Activated T-helper 2 cell treated with anti-CD3 and anti-CD28 coated beads, Interferon-gamma antibody, Interleukin-2, Interleukin-4, amounts not matched to agents 10 μg/mL and 5 μg/mL and 100 μg/mL, durations not matched to agents 14 hours and 24 hours and 36 hours (primary cell): ENCODE measurements at regions of chr2 and their contacts with region 1.

Region 1: DNA sequence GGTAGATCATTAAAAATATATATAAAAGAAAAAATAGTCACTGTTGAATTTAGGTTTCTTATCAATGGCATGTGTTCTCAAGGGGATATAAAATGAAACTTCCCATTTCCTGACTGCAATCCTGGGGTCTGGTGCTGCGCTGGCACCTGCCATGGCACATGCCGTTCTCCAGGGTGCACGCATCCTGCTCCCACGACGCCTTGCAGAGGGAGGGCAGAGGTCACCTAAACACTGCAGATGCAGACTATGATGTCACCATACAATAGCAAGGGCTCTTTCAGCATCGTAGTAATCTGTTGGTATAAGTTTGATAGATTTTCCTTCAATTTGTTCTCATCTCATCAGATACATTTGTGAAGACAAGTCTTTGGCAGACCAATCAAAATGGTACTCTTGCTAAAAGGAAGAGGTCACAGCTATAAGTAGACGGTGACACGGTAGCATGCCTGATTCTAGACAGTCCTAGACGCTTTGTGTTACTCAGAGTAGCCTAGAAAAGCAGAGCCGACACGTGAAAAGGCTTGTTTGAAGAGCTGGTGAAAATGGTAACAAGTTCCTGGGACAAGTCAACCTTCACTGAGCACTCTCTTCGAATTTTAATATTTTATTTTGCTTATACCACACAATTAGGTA is 761.4 kb downstream of the DCDC2C start:
- DNase-seq: no peak
- H3K4me3 Mint-ChIP-seq: no peak overlapping the region
- H3K27ac Mint-ChIP-seq: no peak overlapping the region
- H3K4me1 Mint-ChIP-seq: no peaks in the 10 kb centered on the region
- H3K27me3 Mint-ChIP-seq: no peaks in the 10 kb centered on the region

Region 2: DNA sequence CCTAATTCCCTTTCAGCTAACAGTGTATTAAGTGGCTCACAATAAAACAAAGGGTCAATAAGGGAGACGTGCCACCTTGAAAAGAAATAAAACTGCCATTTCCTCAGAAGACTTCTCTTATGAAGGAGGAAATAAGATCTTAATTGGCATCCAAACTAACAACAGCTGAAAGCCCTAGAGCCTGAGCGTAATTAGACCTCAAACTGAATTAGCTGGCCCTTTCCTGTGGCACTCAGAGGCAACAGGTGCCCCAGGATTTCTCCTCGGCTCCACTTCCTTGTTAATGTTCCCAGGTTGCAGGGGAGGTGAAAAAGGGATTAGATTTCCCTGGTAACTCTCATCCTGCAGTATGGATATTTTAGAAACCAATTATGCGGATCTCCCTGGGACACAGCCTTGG is 42.9 kb after region 1 on chr2:
- intact Hi-C with region 1: loop called (anchors 2 kb)
- DNase-seq: no peak
- H3K4me3 Mint-ChIP-seq: no peak overlapping the region
- H3K27ac Mint-ChIP-seq: no peak overlapping the region
- H3K4me1 Mint-ChIP-seq: no peaks in the 10 kb centered on the region
- H3K27me3 Mint-ChIP-seq: no peaks in the 10 kb centered on the region